A673 (cell line): ENCODE measurements at regions of chr11 and their contacts with region 1.

Region 1: GRCh38 chr11:8688414-8689362 is 6.1 kb downstream of the RPL27A start:
- DNase-seq: peak; percentile 96
- H3K4me3 ChIP-seq: peak overlapping the region; percentile 57
- H3K27ac ChIP-seq: peak overlapping the region; percentile 55
- H3K4me1 ChIP-seq: peaks cover 29% of the 10 kb centered on the region
- H3K27me3 ChIP-seq: no peaks in the 10 kb centered on the region
- CTCF ChIP-seq: no peak

Region 2: DNA sequence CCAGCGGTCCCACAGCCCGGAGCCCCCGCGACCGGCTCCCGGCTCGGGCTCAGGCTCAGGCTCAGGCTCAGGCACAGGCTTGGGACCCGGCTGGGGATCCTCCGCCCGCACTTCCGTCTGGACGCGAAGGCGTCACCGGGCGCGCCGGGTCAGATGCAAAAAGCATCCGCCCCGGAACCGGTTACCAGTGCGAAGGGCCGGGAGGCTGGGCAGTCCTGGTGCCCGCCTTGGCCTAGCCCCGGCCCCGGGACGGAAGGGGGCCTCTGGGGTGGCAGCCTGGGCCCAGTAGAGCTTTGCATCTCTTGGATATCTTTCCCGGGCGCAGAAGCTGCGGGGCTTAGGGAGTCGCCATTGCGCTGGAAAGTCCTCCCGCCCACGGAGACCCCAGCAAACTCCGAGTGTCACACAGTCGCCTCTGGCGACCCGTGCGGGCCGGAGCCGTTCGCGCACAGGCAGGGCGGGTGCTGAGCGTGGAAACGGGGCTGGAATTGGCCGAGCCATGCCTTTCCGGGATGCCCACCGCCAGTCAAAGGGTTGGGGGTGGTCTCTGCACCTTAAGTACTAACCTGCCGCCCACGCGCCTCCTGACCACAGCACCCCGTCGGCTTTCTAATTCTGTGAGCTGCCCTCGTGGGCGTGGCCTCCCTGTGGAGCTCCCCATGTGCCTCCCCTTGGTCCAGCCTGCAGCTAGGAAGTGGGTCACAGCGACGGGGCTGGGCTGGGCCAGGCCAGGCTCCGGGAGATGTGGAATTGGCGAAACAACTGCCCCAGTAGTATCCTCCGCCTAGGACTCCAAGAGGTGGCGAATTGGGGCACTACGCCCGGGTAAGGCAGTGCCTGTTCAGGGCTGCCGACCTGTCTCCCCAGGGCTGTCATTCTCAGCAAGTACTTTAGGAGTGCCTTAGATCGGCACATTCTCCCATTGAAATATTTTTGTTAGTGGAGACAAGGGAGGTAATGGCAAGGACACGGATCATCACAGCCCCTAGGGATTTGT is 275.9 kb after region 1 on chr11 and contains the start of gene TMEM9B:
- CTCF ChIA-PET with region 1: no interaction called
- POLR2A ChIA-PET with region 1: no interaction called
- intact Hi-C with region 1: loop called (anchors 10 kb)
- DNase-seq: peak; percentile 76
- H3K4me3 ChIP-seq: peak within 1 kb of the TSS; percentile 92
- H3K27ac ChIP-seq: peak within 1 kb of the TSS; percentile 73
- H3K4me1 ChIP-seq: no peaks in the 10 kb centered on the region
- H3K27me3 ChIP-seq: no peaks in the 10 kb centered on the region
- CTCF ChIP-seq: no peak
- total RNA-seq, gene TMEM9B: 9.1 and 11.3 TPM in 2 replicates